Activated naive CD4-positive, alpha-beta T cell treated with anti-CD3 and anti-CD28 coated beads, Interleukin-2, amount 10 ng/mL, durations not matched to agents 7 days and 5 days (primary cell): ENCODE measurements at regions of chr9 and their contacts with region 1.

Region 1: DNA sequence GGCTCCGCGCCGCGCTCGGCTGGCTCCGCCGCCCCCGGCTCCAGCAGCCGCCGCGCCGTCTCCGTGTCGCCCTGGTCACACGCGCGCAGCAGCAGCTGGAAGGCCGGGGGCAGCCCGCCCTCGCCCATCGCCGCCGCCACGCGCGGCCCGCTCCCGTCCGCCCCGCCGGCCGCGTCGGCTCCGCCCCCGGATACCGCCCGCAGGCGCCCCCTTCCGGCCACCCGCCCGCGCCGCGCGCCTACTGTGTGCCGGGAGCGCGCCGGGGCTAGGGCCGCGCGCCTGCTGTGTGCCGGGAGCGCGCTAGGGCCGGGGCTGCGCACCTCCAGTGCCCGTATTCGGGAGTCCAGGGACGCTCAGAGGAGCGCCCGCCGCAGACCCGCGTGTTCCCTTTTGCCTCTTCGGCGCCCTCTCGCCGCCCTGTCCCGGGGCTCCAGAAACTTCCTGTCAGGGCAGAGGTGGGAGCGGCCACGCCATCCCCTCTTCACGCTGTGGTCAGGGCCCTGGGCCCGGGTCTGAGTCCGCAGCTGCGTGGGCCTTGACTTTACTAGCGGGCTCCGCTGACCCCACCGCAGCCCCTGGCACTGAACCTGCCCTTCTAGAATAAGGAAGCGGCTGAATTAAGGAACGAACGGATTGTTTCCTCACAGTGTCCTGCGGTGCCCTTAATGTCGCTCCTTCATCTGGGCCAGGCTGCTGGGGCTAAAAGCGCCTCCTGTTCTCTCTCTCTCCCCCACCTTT is at the start of gene ANKS6:
- DNase-seq: peak; percentile 84
- H3K4me3 Mint-ChIP-seq: peak within 1 kb of the TSS; percentile 80
- H3K27ac Mint-ChIP-seq: no peak within 1 kb of the TSS
- H3K4me1 Mint-ChIP-seq: peaks cover 29% of the 10 kb centered on the region
- H3K27me3 Mint-ChIP-seq: peaks cover 25% of the 10 kb centered on the region

Region 2: GRCh38 chr9:98807070-98807810 is 10.7 kb after region 1 on chr9 and contains the start of gene GALNT12:
- CTCF ChIA-PET with region 1: interaction called, 27 read pairs
- DNase-seq: peak; percentile 70
- H3K4me3 Mint-ChIP-seq: peak within 1 kb of the TSS; percentile 84
- H3K27ac Mint-ChIP-seq: peak within 1 kb of the TSS; percentile 67
- H3K4me1 Mint-ChIP-seq: peaks cover 24% of the 10 kb centered on the region
- H3K27me3 Mint-ChIP-seq: peaks cover 47% of the 10 kb centered on the region

Region 3: GRCh38 chr9:98854266-98854665 is 57.7 kb after region 1 on chr9:
- CTCF ChIA-PET with region 1: no interaction called
- DNase-seq: no peak
- H3K4me3 Mint-ChIP-seq: no peak overlapping the region
- H3K27ac Mint-ChIP-seq: no peak overlapping the region
- H3K4me1 Mint-ChIP-seq: peaks cover 11% of the 10 kb centered on the region
- H3K27me3 Mint-ChIP-seq: peaks cover 39% of the 10 kb centered on the region